GM12878 (cell line): ENCODE measurements at regions of chr11 and their contacts with region 1.

Region 1: DNA sequence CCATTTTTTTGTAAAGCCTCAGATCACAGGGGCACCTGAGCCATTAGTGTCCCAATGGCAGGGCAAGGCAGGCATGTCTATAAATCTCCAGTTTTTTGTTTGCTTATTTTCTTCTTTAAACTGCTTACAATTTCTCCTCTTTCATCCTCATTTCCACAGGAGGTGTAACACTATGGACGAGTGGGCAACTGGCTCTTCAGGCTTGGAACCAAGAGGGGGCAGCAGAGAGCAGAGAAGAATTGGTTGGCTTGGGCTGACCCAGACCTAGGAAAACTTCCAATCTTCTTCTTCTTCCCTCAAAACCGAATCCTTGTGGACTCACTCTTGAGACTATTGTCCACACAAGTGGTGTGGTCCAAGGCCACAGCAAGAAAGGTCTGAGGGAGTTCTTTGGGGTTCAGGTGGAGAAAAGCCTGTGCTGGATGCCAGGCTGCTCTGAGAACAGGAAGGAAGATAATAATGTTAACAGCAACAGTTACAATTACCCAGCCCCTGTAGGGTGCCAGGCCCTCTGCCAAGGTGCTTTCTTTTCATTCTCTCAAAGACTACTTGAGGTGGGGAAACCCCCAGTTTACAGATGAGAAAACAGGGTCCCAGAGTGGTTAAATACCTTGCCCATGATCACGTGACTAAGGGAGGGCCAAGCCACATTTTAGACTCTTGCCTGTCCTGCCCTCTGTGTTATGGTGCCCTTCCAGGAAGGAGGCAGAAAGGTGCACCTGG is 70.7 kb upstream of the E2F8 start:
- DNase-seq: peak; percentile 19
- ATAC-seq: peak; percentile 92
- H3K4me3 ChIP-seq: no peak overlapping the region
- H3K27ac ChIP-seq: no peak overlapping the region
- H3K4me1 ChIP-seq: peaks cover 6% of the 10 kb centered on the region; the same call in 1 of the 2 replicates
- H3K27me3 ChIP-seq: no peaks in the 10 kb centered on the region
- CTCF ChIP-seq: peak; percentile 75 to 86 (median 79)
- EP300 ChIP-seq: no peak
- POLR2A ChIP-seq: no peak
- RAD21 ChIP-seq: peak; percentile 81

Region 2: DNA sequence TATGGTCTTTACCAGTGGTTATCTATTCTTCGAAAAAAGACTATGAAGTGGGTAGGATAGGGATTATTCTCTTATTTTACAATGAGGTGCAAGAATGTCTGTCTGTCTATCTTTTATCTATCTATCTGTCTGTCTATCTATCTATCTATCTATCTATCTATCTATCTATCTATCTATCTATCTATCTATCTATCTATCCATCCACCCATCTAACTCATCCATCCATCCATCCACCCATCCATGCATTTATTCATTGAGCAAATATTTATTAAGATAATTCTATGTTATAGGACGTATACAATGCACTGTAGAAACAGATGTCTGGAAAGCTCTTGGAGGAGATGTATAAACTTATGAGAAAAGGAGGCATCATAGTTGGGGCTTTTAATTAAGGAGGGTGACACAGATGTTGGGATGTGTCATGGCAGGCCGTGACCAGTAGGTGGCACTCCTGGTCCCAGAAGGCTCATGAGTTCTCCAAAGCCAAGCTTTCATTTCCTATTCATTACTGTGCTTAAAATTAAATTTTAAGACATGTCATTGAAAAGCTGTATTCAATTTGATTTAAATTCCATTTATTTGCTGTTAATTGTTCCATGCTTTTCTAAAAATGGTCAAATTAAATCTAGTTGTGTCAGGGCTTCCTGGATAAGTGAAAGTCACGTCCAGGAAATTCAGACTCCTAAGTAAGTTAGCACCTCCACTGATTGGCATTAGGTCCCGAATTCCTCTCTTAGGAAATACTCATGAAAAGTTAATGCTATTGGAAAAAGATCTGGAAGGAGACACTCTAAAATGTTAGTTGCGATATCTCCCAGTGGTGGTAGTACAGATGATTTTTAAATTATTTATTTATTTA is 51.8 kb before region 1 on chr11:
- CTCF ChIA-PET with region 1: interaction called, 7 read pairs
- POLR2A ChIA-PET with region 1: no interaction called
- RAD21 ChIA-PET with region 1: interaction called, 5 read pairs
- SMC1A ChIA-PET with region 1: interaction called, 4 read pairs
- in situ Hi-C with region 1: no loop called
- intact Hi-C with region 1: loop called (anchors 2 kb)
- DNase-seq: no peak
- ATAC-seq: peak; percentile 91
- H3K4me3 ChIP-seq: no peak overlapping the region
- H3K27ac ChIP-seq: no peak overlapping the region
- H3K4me1 ChIP-seq: no peaks in the 10 kb centered on the region; the same call in 1 of the 2 replicates
- H3K27me3 ChIP-seq: no peaks in the 10 kb centered on the region; a peak in 1 of 4 replicates
- CTCF ChIP-seq: peak; percentile 90 to 96 (median 93)
- EP300 ChIP-seq: no peak
- POLR2A ChIP-seq: no peak
- RAD21 ChIP-seq: peak; percentile 78